PC-9 (cell line): ENCODE measurements at regions of chr6 and their contacts with region 1.

Region 1: DNA sequence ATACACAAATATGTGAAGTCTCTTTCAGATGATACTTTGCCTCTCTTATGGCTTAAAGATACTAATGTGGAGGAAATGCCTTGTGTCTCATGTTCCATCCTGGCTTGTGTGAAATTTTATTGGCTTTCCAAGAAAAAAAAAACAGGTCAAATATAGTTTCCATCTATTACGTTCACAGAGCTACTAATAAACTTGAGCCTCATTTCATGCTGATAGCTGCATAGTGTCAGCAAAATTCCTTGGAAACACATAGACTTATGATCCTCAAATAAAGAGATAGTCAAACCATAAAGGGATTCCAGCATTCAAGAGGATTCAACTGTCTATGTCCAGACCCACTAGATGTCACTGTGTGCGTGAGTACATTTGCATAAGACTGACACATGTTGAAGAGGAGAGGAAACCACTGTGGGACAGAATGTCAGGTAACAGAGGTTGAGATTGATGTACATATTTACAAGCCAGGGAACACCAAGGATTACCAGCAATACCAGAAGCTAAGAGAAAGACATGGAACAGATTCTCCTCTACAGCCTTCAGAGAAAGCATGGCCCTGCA is 266.6 kb downstream of the COL12A1 start:
- DNase-seq: no peak
- H3K4me3 ChIP-seq: no peak overlapping the region
- H3K27ac ChIP-seq: no peak overlapping the region
- H3K4me1 ChIP-seq: no peaks in the 10 kb centered on the region
- H3K27me3 ChIP-seq: no peaks in the 10 kb centered on the region
- CTCF ChIP-seq: no peak

Region 2: DNA sequence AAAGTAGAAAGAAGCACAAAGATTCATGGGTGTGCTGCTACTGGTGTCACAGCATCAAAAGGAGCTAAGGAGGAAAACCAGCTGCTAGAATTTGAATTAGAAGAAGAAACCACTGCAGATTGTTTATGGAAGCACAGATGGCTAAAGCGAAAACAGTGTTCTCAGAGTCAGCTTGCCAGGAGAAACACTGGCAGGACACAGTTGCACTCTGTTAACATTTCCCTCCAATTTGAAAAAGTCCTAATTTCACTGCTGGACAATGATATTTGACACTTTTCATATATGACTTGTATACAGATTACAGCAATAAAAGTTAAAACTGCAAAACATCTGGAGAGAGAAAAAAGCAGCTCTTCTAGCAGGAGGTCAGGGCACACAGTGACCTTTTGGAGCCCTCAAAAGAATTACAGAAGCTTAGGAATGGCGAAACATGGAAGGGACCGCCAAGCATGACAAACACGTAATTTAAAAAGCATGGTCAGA is 47.8 kb before region 1 on chr6:
- CTCF ChIA-PET with region 1: no interaction called
- POLR2A ChIA-PET with region 1: no interaction called
- intact Hi-C with region 1: no loop called
- DNase-seq: no peak
- H3K4me3 ChIP-seq: no peak overlapping the region
- H3K27ac ChIP-seq: no peak overlapping the region
- H3K4me1 ChIP-seq: no peaks in the 10 kb centered on the region
- H3K27me3 ChIP-seq: no peaks in the 10 kb centered on the region
- CTCF ChIP-seq: no peak

Region 3: GRCh38 chr6:74964871-74965441 is 25.7 kb after region 1 on chr6:
- CTCF ChIA-PET with region 1: no interaction called
- POLR2A ChIA-PET with region 1: no interaction called
- intact Hi-C with region 1: no loop called
- DNase-seq: no peak
- H3K4me3 ChIP-seq: no peak overlapping the region
- H3K27ac ChIP-seq: no peak overlapping the region
- H3K4me1 ChIP-seq: no peaks in the 10 kb centered on the region
- H3K27me3 ChIP-seq: no peaks in the 10 kb centered on the region
- CTCF ChIP-seq: no peak

Region 4: DNA sequence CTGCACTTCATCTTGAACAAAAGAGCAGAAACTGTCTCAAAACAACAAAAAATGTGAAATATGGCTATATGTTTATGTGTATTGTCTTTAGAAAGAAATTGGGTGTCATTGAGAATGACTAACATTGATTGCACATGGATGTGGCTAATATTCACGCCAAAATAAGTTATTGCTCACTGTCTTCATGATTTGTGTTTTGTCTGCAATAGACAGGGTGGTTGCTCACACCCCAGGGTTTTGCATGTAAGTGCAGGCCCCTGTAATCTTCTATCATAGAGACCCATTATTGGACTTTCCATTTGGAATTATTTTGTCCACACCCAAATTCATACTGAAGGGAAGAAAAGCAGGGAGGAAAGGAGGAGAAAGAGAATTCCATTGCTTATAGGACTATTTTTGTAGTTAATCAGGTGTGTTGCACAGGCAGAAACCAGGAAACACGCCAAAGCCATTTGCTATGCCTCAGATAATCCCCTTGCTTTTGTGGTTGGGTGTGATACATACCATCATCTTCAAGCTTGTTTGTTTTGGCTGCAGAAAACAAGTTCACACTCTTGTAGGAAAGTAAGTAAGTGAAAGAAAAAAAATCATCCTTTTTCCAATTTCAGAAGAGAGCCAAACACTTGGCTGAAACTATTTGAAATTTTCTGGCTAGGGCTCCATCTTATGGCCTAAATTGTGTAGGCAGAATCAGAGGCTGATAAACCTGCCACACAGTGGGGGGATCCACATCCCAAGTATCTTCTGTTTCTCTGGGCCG is 52.5 kb after region 1 on chr6:
- CTCF ChIA-PET with region 1: no interaction called
- POLR2A ChIA-PET with region 1: interaction called, 11 read pairs
- intact Hi-C with region 1: no loop called
- DNase-seq: peak; percentile 16 to 41
- H3K4me3 ChIP-seq: no peak overlapping the region
- H3K27ac ChIP-seq: no peak overlapping the region
- H3K4me1 ChIP-seq: no peaks in the 10 kb centered on the region
- H3K27me3 ChIP-seq: no peaks in the 10 kb centered on the region
- CTCF ChIP-seq: no peak

Region 5: GRCh38 chr6:75467966-75468365 is 528.7 kb after region 1 on chr6:
- CTCF ChIA-PET with region 1: no interaction called
- POLR2A ChIA-PET with region 1: no interaction called
- intact Hi-C with region 1: no loop called
- DNase-seq: no peak
- H3K4me3 ChIP-seq: no peak overlapping the region
- H3K27ac ChIP-seq: no peak overlapping the region
- H3K4me1 ChIP-seq: no peaks in the 10 kb centered on the region
- H3K27me3 ChIP-seq: no peaks in the 10 kb centered on the region
- CTCF ChIP-seq: no peak